Astrocyte of the cerebellum (primary cell): ENCODE measurements at regions of chr4 and their contacts with region 1.

Region 1: GRCh38 chr4:125229596-125230058 is 85.1 kb upstream of the FAT4 start:
- DNase-seq: no peak
- H3K4me3 ChIP-seq: no peak overlapping the region
- CTCF ChIP-seq: no peak

Region 2: DNA sequence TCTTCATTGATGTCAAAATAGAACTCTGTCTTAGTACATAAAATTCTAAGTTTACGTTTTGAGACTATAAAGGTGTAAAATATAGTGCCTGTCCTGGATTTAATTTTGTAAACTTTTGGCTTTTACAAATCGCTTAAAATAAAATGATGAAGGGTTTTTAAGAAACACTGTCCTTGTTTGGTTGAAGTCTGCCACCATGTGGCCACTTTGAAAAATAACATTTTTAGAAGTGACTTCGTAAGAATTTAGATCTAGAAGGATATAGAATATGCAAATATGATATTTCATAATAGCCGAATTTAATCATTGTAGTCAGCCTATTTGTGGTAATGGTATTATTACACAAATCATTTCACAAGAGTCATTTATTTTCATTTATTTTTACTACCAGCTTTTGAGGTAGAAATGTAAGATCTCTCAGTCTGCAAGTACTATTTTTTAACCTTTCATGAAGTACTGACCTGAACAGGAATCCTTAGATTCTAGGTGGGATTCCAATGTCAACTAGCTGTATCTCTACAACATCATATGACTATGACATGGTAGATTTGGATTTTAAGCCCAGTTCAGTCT is 54.2 kb after region 1 on chr4:
- in situ Hi-C with region 1: loop called (anchors 5 kb)
- DNase-seq: peak; percentile 11
- H3K4me3 ChIP-seq: no peak overlapping the region
- CTCF ChIP-seq: peak; percentile 22

Region 3: GRCh38 chr4:125314676-125315575 is 85.3 kb after region 1 on chr4 and contains the start of gene FAT4:
- in situ Hi-C with region 1: no loop called
- DNase-seq: peak; percentile 95
- H3K4me3 ChIP-seq: peak within 1 kb of the TSS; percentile 98
- CTCF ChIP-seq: peak; percentile 7